Sciatic nerve (tissue), 2 donors: ENCODE measurements at regions of chr22 and their contacts with region 1.

Region 1: DNA sequence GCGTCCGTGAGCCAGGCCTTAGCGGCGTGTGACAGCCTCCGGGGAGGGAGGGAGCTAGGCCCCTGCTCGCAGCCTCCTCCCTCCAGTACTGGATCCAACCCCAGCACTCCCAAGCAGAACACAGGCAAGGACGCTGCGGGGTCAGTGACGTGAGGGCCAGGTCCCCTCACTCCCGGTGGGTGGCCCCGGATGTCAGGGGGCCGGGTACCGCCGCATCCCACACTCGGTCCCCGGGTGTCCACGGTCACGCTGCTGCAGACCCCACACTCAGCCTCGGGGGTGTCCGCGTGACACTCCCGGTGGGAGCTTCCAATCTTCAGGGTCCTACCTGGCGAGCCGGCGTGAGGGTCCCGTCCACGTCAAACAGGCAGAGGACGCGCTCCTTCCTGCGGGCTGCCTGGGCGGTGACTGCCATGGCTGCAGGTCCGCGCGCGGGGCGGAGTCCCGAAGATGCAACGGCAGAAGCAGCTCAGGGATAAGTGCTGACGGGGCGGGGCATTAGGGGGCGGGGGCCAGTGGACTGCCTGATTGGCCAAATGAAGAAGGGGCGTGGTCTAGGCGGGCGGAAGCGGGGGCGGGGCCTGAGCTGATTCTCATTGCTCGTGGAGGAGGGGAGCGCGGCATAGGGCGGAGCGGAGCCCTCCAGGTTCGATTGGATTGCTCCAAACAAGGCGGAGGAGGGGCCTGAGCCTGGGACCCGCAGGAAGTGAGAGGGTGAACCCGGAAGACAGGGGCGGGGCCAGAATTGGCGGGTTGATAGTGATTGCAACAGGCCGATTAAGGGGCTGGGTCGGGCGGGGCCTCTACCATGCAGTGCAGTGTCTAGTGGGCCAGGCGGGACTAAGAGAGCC is at the start of gene PMM1:
- DNase-seq: peak; percentile 100
- ATAC-seq: peak; percentile 99
- total RNA-seq, gene PMM1: 28.4 TPM

Region 2: GRCh38 chr22:41532908-41533825 is 56.4 kb before region 1 on chr22:
- intact Hi-C with region 1: loop called (anchors 10 kb)
- DNase-seq: peak; percentile 85
- ATAC-seq: peak; percentile 60

Region 3: GRCh38 chr22:41699264-41700014 is 109.8 kb after region 1 on chr22 and contains the start of gene MEI1:
- intact Hi-C with region 1: no loop called
- DNase-seq: peak; percentile 91
- ATAC-seq: peak; percentile 85
- total RNA-seq, gene MEI1: 2.9 TPM